ENCODE measurements at regions of chr1 and their contacts with region 1.

Region 1: DNA sequence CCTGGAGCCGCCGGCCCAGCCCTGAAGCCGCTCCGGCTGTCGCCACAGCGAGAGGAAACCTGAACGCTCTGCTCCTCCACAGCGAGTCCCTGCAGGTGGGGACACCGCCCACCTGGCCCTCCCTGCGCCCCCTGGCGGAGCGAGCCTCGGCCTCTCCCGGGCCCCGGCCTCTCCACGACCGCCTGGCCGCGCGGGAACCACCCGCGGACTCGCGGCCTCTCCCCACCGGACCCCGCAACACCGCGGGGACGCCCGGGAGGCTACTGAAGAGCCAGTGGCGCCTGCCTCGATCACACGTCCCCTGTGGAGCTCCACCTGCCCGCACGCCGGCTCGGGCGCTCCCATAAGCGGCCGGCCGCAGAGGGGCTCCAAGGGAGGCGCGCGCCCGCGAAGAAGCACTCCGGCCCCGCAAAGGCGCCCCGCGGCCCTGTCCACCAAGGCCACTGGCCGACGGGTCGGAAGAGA is 109.6 kb downstream of the KCNN3 start:
- DNase-seq: peak in 1 of 2 experiments; percentile 45
- H3K4me3 ChIP-seq: no peak overlapping the region
- H3K27ac ChIP-seq: no peak overlapping the region
- H3K4me1 ChIP-seq: no peaks in the 10 kb centered on the region
- H3K27me3 ChIP-seq: peaks cover 61% of the 10 kb centered on the region
- CTCF ChIP-seq: peak; percentile 39; the same call in 1 of the 2 replicates

Region 2: DNA sequence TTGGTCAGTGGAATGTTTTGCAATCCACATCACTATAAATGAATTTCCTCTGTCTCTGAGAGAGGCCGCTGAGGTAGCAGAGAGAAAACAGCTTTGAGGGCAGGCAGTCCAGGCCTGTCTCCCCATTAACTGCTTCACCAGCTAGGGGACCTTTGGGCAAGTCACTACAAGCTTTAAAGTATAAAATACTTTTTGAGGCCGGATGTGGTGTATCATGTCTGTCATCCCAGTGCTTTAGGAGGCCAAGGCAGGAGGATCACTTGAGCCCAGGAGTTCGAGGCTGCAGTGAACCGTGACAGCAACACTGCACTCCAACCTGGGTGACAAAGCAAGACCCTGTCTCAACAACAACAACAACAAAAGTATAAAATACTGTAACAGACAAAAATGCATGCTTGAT is 349.0 kb before region 1 on chr1:
- CTCF ChIA-PET with region 1: interaction called, 12 read pairs
- POLR2A ChIA-PET with region 1: no interaction called
- intact Hi-C with region 1: no loop called
- DNase-seq: no peak
- H3K4me3 ChIP-seq: no peak overlapping the region
- H3K27ac ChIP-seq: no peak overlapping the region
- H3K4me1 ChIP-seq: peaks cover 5% of the 10 kb centered on the region
- H3K27me3 ChIP-seq: 0 out of 2 replicates have a peak, but pooled peaks cover 5% of the 10 kb centered on the region
- CTCF ChIP-seq: no peak

Region 3: DNA sequence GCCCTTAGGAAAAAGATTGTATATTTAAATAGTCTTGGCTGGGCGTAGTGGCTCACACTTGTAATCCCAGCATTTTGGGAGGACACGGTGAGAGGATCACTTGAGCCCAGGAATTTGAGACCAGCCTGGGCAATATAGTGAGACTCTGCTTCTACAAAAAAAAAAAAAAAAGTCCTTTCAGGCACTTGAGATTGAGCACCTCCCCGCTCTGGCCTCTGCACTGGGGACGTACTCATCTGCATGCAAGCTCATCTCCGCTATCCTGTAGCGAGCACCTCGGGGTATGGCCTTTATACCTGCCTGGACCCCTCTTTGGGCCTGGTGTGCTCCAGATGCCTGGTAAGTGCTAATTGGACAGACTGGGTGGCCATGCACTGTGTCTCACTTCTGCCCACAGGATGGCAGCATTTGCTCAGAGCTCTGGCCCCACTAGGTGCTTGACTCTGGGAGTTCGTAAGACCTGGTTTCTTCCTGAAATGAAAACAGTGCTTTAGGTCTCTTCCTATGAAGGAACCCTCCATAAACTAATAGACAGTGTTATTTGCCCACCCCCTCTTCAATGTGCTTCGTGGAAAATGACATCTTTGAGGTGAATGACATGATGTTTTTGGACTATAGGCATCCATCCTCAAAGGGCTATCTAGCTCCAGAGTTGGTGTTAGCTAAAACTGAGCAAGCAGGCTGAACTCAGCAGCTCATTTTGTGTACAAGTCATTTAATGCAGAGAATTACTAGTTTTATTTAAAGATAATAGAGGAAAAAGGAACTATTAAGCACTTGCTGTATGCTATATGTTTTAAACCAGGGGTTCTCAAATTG is 90.8 kb before region 1 on chr1:
- CTCF ChIA-PET with region 1: no interaction called
- POLR2A ChIA-PET with region 1: interaction called, 4 read pairs
- intact Hi-C with region 1: loop called (anchors 2 kb)
- DNase-seq: peak; percentile 62 to 70
- H3K4me3 ChIP-seq: no peak overlapping the region
- H3K27ac ChIP-seq: no peak overlapping the region
- H3K4me1 ChIP-seq: no peaks in the 10 kb centered on the region
- H3K27me3 ChIP-seq: peaks cover 9% of the 10 kb centered on the region; the same call in 1 of the 2 replicates
- CTCF ChIP-seq: peak; percentile 84

Region 4: GRCh38 chr1:154695985-154696384 is 64.5 kb before region 1 on chr1:
- CTCF ChIA-PET with region 1: no interaction called
- POLR2A ChIA-PET with region 1: no interaction called
- intact Hi-C with region 1: loop called (anchors 10 kb)
- DNase-seq: no peak
- H3K4me3 ChIP-seq: no peak overlapping the region
- H3K27ac ChIP-seq: no peak overlapping the region
- H3K4me1 ChIP-seq: no peaks in the 10 kb centered on the region
- H3K27me3 ChIP-seq: peaks cover 55% of the 10 kb centered on the region
- CTCF ChIP-seq: peak; percentile 28; the same call in 1 of the 2 replicates

Region 5: DNA sequence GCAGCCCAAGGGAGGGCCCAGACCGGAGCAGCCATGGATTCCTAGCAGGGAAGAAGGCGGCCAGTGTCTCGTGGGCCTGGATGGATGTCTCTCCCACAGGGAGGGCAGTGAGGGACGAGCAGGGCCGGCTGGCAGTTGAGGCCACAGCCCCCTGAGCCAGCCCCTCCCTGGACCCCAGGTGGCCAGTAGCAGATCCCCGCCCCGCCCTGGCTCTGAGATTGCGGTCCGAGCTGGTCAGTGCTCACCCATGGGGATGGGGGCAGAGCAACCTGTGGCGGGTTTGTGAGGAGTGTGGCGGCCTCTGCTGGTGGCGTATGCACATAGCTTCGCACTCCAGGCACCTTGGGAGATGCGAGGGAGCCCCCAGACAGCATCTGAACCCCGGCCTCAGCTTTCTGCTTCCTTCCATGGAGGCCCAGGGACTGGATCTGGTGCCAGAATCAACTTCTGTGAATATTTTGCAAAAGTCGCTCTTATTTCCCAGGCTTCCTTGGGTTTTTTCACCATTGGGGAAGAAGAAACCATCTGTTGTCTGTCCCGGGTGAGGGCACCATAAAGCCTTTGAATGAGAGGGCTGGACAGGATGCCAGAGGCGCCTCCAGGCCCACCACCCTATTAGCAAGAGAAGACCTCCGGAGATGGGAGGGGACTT is 118.0 kb after region 1 on chr1:
- CTCF ChIA-PET with region 1: no interaction called
- POLR2A ChIA-PET with region 1: no interaction called
- intact Hi-C with region 1: loop called (anchors 5 kb)
- DNase-seq: peak in 1 of 2 experiments; percentile 75
- H3K4me3 ChIP-seq: no peak overlapping the region
- H3K27ac ChIP-seq: no peak overlapping the region
- H3K4me1 ChIP-seq: peaks cover 13% of the 10 kb centered on the region
- H3K27me3 ChIP-seq: peaks cover 59% of the 10 kb centered on the region; the same call in 1 of the 2 replicates
- CTCF ChIP-seq: peak; percentile 89

Region 6: DNA sequence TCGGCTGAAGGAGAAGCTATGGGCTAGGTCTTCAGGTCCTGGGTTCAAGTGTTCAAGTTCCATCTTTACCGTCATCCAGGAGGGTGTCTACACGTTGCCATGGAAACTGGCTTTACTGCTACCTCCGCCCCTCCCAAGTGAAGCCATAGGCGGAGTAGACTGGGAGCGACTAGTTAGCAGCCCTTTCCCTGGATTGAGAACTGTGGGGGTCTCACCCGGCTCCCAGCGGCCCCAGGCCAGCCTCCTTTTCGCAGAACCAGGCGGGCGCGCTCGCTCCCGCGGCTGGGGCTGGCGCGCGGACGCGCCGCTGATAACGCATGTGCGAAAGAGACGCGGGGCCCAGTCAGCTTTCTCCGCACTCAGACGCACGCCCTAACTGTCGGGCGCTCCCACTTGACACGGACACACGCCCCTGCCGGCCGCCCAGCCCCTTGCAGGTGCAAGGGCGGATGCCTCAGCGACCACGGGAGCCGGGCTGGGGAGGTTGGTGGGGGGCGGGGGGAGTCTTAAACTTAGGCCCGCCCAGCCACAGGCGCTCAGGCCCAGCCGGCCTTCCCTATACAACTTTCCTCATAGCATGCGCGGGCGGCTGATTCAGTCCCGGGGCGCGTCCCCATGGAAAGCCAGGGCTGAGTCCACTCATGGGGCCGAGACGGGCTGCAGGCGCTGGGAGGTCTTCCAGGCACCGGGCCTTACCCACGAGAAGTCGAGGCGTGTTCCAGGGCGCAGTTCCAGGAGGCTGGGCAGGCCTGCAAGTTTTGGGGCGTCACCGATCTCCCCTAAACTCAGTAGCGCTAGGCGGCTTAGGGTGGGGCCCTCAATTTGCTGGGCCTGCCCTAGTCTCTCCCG is 310.4 kb after region 1 on chr1:
- CTCF ChIA-PET with region 1: no interaction called
- POLR2A ChIA-PET with region 1: no interaction called
- intact Hi-C with region 1: no loop called
- DNase-seq: peak; percentile 61 to 82
- H3K4me3 ChIP-seq: peak overlapping the region; percentile 48; the same call in 1 of the 2 replicates
- H3K27ac ChIP-seq: no peak overlapping the region
- H3K4me1 ChIP-seq: peaks cover 5% of the 10 kb centered on the region; the same call in 1 of the 2 replicates
- H3K27me3 ChIP-seq: no peaks in the 10 kb centered on the region
- CTCF ChIP-seq: peak; percentile 48

Measured in PC-9 (cell line).